ENCODE measurements at regions of chr10 and their contacts with region 1.

Region 1: DNA sequence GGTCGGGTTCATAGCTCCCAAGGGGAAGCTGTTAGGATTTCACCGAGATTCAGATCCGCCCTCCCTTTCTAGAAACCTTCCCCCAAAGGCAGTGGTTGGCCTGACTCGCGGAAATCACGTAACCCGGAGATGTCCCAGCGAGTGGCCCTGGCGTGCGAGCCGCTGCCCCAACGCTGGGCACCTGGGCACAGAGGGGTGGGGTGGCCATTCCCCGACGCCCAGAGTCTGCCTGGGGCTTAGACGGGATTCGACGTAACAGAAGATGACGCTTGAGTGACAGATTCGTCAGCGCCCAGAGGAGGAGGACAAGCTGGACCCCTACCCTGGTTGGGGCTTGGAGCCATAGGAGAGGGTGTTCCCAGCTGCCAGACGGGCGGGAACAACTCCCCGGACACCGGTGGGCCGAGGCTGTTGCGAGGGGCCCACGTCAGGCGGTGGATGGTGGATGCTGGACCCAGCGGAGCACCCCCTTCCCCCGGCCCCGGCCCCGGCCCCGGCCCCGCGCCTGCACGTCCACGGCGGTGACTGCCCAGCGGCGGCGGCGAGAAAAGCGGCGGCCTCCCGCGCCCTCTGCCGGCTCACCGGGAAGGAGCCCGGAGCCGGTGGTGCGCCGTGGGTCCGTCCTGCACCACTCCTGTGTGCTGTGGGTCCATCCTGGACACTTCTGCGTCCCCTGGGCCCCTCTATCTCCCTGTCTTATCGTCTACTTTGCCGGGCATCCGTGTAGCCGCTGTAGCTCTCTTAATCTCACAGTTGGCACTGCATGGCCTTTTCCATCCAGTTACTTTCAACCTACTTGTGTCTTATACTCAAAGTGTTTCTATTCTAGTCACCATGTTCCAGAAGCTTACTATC is 35.4 kb upstream of the KNDC1 start:
- DNase-seq: no peak
- H3K4me3 ChIP-seq: no peak overlapping the region
- CTCF ChIP-seq: no peak
- POLR2A ChIP-seq: no peak

Region 2: GRCh38 chr10:132836832-132837540 is 287.6 kb before region 1 on chr10:
- intact Hi-C with region 1: loop called (anchors 5 kb)
- DNase-seq: peak; percentile 13 to 78
- H3K4me3 ChIP-seq: no peak overlapping the region
- CTCF ChIP-seq: peak in 1 of 3 donors; percentile 49
- POLR2A ChIP-seq: no peak